ENCODE measurements at regions of chr10 and their contacts with region 1.

Region 1: DNA sequence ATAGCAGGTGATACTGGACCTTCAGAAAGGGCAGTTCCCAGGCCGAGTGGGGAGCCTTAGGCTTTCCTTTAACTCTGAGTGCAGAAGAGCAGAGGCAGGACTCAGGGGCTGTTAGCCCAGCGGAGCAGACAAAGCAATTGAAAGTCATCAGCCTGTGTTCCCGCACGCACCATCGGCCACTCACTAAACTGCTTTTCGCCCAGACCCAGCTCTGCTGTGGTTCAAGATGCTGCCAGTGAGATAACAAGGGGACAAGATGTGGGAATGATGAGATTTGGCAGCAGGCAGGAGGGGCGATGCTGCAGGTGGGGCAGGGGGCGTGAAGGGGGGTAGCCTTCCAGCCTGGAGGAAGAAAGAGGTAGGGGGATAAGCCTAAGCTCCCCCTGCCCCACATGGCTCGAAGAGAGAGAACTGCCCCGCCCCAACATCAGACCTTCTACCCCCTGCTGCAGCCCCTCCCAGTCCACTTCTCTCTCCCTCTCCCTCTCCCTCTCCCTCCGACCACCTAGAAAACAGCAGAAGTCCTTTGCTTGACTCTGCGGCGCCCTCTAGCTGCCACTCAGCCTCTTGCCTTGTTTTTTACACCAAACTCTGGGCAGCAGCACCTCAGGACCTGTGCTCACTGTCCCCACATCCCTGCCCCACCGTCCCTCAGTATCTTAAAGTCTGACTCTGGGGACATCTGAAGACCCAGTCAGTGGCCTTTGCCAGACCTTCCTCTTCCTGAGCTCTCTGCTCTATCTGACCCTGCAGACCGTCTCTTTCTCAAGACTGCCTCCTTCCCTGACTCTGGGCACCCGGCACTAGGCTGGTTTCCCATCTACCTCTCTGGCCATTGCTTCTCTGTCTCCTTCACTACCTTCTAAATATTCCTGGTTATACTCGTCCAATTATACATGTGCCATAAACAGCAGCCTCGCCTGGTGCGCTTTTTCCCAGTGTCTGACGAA is 110.5 kb downstream of the C10orf105 start:
- DNase-seq: peak; percentile 48 to 69
- H3K4me3 ChIP-seq: no peak overlapping the region
- H3K27ac ChIP-seq: no peak overlapping the region
- H3K4me1 ChIP-seq: peaks cover 60% of the 10 kb centered on the region
- H3K27me3 ChIP-seq: no peaks in the 10 kb centered on the region
- CTCF ChIP-seq: peak; percentile 92

Region 2: GRCh38 chr10:71396084-71396720 is 212.9 kb before region 1 on chr10:
- CTCF ChIA-PET with region 1: interaction called, 3 read pairs
- POLR2A ChIA-PET with region 1: no interaction called
- intact Hi-C with region 1: loop called (anchors 5 kb)
- DNase-seq: peak; percentile 49 to 70
- H3K4me3 ChIP-seq: peak overlapping the region; percentile 60
- H3K27ac ChIP-seq: no peak overlapping the region
- H3K4me1 ChIP-seq: peaks cover 41% of the 10 kb centered on the region
- H3K27me3 ChIP-seq: peaks cover 8% of the 10 kb centered on the region; the same call in 1 of the 2 replicates
- CTCF ChIP-seq: peak; percentile 57

Region 3: DNA sequence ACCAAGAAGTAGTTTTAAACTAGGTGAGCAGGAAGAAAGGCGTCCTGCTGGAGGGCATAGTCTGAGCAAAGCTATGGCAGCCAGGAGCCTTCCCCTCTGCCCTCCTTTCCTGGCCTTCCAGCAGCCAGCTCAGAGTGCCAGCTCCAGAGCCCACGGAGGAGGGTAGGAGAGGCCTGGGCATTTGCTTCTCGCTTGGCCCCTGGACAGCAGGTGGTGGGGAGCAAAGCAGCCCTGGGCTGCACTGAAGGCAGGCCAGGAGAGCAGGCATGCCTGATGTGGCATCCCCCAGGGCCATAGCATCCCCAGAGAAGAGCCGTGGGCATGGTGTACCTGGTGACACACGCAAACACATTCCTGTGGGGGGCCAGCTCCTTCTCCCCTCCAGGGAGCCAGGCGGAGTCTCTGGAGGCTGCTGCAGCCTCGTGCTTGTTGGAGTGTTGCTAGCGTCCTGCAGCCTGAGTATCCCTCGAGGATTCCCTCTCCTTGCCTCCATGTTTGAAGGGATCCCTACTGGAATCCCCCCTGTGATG is 168.5 kb before region 1 on chr10:
- CTCF ChIA-PET with region 1: interaction called, 13 read pairs
- POLR2A ChIA-PET with region 1: no interaction called
- intact Hi-C with region 1: no loop called
- DNase-seq: peak; percentile 28 to 50
- H3K4me3 ChIP-seq: no peak overlapping the region
- H3K27ac ChIP-seq: no peak overlapping the region
- H3K4me1 ChIP-seq: peaks cover 18% of the 10 kb centered on the region
- H3K27me3 ChIP-seq: no peaks in the 10 kb centered on the region
- CTCF ChIP-seq: no peak

Region 4: GRCh38 chr10:71531485-71532446 is 77.3 kb before region 1 on chr10:
- CTCF ChIA-PET with region 1: no interaction called
- POLR2A ChIA-PET with region 1: no interaction called
- intact Hi-C with region 1: no loop called
- DNase-seq: no peak
- H3K4me3 ChIP-seq: no peak overlapping the region
- H3K27ac ChIP-seq: no peak overlapping the region
- H3K4me1 ChIP-seq: no peaks in the 10 kb centered on the region
- H3K27me3 ChIP-seq: no peaks in the 10 kb centered on the region
- CTCF ChIP-seq: no peak

Region 5: GRCh38 chr10:71631007-71631859 is 22.1 kb after region 1 on chr10:
- CTCF ChIA-PET with region 1: interaction called, 11 read pairs
- POLR2A ChIA-PET with region 1: no interaction called
- intact Hi-C with region 1: no loop called
- DNase-seq: no peak
- H3K4me3 ChIP-seq: no peak overlapping the region
- H3K27ac ChIP-seq: no peak overlapping the region
- H3K4me1 ChIP-seq: no peaks in the 10 kb centered on the region
- H3K27me3 ChIP-seq: no peaks in the 10 kb centered on the region
- CTCF ChIP-seq: no peak